B cell (primary cell): ENCODE measurements at regions of chr3 and their contacts with region 1.

Region 1: GRCh38 chr3:143529018-143529478 is 319.2 kb downstream of the SLC9A9 start:
- DNase-seq: peak; percentile 91
- ATAC-seq: peak; percentile 99
- H3K4me3 ChIP-seq: peak overlapping the region in 4 of 5 experiments; percentile 5 to 50 (median 22)
- H3K4me3 Mint-ChIP-seq: peak overlapping the region; percentile 72
- H3K27ac ChIP-seq: peak overlapping the region; percentile 98
- H3K27ac Mint-ChIP-seq: peak overlapping the region; percentile 91
- H3K4me1 ChIP-seq: peaks cover 55 to 69% of the 10 kb centered on the region in 2 donors
- H3K4me1 Mint-ChIP-seq: peaks cover 79% of the 10 kb centered on the region
- H3K27me3 ChIP-seq: no peaks in the 10 kb centered on the region
- H3K27me3 Mint-ChIP-seq: no peaks in the 10 kb centered on the region
- CTCF ChIP-seq: no peak

Region 2: DNA sequence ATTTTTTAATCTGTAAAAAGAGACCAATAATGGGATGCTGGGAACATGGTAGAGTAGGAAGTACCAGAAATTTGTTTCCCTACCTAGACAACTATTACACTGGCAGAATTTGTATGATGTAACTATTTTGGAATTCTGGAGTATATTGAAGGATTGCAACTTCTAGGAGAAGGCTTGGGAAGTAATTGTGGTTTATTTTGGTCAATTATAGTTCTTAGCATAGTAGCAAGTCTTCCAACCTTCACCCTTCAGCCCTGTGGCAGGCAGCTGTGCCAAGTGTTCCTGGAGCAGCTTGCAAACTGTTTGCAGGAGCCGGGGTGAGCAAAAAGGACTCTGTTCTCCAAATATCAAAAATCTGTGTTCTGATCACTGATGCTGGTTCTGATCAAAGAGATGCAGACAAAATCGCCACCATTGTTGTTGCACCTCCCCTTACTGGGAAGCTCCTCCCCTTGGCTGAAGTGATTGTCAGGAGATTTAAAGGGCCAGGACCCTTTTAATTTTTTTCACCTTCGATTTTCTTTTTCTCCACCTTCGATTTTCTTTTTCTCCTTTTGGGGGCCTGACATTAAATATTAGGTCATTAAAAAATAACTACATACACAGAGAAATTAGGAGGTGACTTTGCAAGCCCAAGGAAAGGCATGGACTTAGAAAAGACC is 44.1 kb before region 1 on chr3:
- CTCF ChIA-PET with region 1: interaction called, 5 read pairs
- POLR2A ChIA-PET with region 1: interaction called, 3 read pairs
- intact Hi-C with region 1: loop called (anchors 5 kb)
- DNase-seq: no peak
- ATAC-seq: no peak
- H3K4me3 ChIP-seq: no peak overlapping the region
- H3K4me3 Mint-ChIP-seq: no peak overlapping the region
- H3K27ac ChIP-seq: no peak overlapping the region
- H3K27ac Mint-ChIP-seq: no peak overlapping the region
- H3K4me1 ChIP-seq: peaks cover 13 to 17% of the 10 kb centered on the region in 2 donors
- H3K4me1 Mint-ChIP-seq: peaks cover 27% of the 10 kb centered on the region
- H3K27me3 ChIP-seq: no peaks in the 10 kb centered on the region
- H3K27me3 Mint-ChIP-seq: no peaks in the 10 kb centered on the region
- CTCF ChIP-seq: no peak

Region 3: GRCh38 chr3:143595456-143596077 is 66.5 kb after region 1 on chr3:
- CTCF ChIA-PET with region 1: interaction called, 3 read pairs
- POLR2A ChIA-PET with region 1: no interaction called
- intact Hi-C with region 1: loop called (anchors 1 kb)
- DNase-seq: peak; percentile 63
- ATAC-seq: peak; percentile 93
- H3K4me3 ChIP-seq: no peak overlapping the region
- H3K4me3 Mint-ChIP-seq: no peak overlapping the region
- H3K27ac ChIP-seq: peak overlapping the region in 1 of 2 donors; percentile 11
- H3K27ac Mint-ChIP-seq: peak overlapping the region; percentile 5
- H3K4me1 ChIP-seq: peaks cover 12 to 16% of the 10 kb centered on the region in 2 donors
- H3K4me1 Mint-ChIP-seq: peaks cover 11% of the 10 kb centered on the region
- H3K27me3 ChIP-seq: no peaks in the 10 kb centered on the region
- H3K27me3 Mint-ChIP-seq: no peaks in the 10 kb centered on the region
- CTCF ChIP-seq: no peak